WTC11 (cell line): ENCODE measurements at regions of chr12 and their contacts with region 1.

Region 1: DNA sequence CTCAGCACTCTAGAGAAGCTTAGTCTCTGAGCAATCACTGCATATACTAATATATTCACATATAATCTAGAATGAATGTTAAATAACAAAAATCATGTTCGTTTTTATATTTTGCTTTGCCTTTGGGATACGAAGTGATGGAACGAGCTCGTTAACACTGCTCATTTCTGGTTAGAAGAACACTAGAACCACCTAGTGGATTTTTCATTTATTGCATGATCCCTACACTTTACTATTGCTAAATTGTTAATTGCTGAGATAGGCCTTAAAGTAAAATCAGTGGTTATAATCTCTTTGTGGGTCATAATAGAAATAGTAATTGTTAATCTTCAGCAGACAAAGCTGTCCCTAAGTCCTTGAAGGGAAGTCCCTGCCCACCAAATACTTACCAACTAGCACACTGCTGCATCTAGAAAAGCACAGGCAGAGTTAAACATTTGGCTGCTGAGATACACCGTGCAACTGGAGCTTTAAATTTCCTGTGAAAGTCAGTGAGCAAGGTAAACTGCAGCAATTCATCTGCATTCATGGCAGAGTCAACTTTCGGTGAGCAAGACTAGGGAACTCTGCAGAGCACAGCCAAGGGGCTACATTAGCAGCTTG is 353.7 kb downstream of the APAF1 start:
- DNase-seq: no peak
- ATAC-seq: peak; percentile 73
- H3K4me3 Mint-ChIP-seq: no peak overlapping the region
- H3K27ac Mint-ChIP-seq: no peak overlapping the region
- H3K4me1 Mint-ChIP-seq: no peaks in the 10 kb centered on the region
- H3K27me3 Mint-ChIP-seq: no peaks in the 10 kb centered on the region
- CTCF ChIP-seq: peak; percentile 40

Region 2: GRCh38 chr12:98572010-98572409 is 426.8 kb before region 1 on chr12:
- CTCF ChIA-PET with region 1: interaction called, 11 read pairs
- POLR2A ChIA-PET with region 1: no interaction called
- DNase-seq: no peak
- ATAC-seq: peak; percentile 94
- H3K4me3 Mint-ChIP-seq: no peak overlapping the region
- H3K27ac Mint-ChIP-seq: no peak overlapping the region
- H3K4me1 Mint-ChIP-seq: no peaks in the 10 kb centered on the region
- H3K27me3 Mint-ChIP-seq: no peaks in the 10 kb centered on the region
- CTCF ChIP-seq: no peak

Region 3: DNA sequence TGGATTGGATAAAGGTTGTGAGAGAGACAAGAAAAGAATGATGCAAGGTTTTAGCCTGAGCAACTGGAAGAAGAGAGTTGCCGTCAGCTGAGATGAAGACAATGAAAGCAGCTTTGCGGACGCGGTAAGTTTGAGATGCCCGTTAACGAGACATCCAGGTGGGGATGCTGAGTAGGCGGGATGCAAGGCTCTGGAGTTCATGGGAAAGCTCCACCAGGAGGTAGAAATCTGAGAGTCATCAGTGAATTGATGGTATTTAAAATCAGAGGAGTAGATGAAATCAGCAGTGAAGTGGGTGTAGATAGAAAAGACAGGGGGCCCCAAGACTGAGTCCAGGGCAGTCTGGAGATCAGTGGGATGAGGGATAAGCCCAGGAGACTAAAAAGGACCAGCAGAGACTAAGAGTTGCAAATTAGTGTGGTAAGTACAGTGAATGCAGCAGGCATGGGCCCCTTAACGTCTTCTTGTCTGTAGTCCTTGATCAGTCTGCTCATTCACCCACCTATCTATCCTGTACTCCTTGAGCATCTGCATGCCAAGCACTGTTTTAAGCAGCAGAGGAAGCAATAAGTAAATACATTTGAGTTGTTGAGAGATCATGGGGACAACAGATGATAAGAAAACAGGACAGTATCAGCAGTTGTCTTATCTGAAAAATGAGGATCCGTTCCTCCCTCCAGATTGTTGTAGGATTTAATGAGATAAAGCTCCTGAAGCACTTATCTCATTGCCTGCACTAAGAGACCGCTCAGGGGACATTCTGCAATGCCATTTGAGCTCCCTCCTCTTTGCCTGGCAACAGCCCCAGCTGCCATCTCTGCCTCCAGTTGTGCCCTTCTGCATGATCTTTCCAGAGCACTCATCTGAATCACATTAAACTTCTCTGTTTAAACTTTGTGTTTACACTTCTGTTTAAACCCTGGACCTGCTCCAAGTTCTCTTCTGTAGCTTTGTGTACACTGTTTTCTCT is 262.2 kb before region 1 on chr12:
- CTCF ChIA-PET with region 1: interaction called, 15 read pairs
- POLR2A ChIA-PET with region 1: no interaction called
- DNase-seq: peak; percentile 25
- ATAC-seq: peak; percentile 69
- H3K4me3 Mint-ChIP-seq: no peak overlapping the region
- H3K27ac Mint-ChIP-seq: no peak overlapping the region
- H3K4me1 Mint-ChIP-seq: peaks cover 10% of the 10 kb centered on the region
- H3K27me3 Mint-ChIP-seq: peaks cover 16% of the 10 kb centered on the region
- CTCF ChIP-seq: no peak

Region 4: GRCh38 chr12:98955277-98955676 is 43.5 kb before region 1 on chr12:
- CTCF ChIA-PET with region 1: interaction called, 11 read pairs
- POLR2A ChIA-PET with region 1: no interaction called
- DNase-seq: peak; percentile 36
- ATAC-seq: peak; percentile 99
- H3K4me3 Mint-ChIP-seq: no peak overlapping the region
- H3K27ac Mint-ChIP-seq: no peak overlapping the region
- H3K4me1 Mint-ChIP-seq: no peaks in the 10 kb centered on the region
- H3K27me3 Mint-ChIP-seq: no peaks in the 10 kb centered on the region
- CTCF ChIP-seq: peak; percentile 54; the same call in 1 of the 2 replicates

Region 5: DNA sequence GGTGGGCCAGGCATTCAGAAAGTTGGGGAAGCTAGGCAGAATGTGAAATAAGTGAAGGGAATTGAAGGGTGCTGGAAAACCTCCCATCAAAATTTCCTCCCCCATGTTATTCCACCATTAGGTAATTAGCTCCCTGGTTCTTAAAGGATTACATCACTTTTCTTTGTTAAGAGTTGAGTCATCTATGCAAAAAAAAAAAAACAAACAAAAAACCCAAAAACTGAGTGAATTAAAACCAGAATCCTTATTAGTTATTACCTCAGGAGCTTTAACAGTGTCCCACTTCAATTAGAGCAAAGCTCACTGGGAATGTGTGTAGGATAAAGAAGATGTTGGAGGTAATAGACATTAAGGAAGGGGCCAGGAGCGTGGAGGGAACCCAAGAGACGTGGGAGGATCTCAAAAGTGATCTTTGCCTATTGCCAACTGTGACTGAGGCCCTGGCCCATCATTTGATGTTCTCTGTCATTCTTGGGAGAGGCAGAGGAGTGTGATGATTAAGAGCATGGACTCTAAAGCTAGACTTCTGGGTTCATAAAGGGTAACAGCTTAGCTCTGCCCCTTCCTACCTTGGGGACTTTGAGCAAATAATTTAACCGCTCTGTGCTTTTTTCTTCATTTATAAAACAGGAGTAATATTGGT is 11.0 kb after region 1 on chr12:
- CTCF ChIA-PET with region 1: interaction called, 11 read pairs
- POLR2A ChIA-PET with region 1: no interaction called
- DNase-seq: no peak
- ATAC-seq: no peak
- H3K4me3 Mint-ChIP-seq: no peak overlapping the region
- H3K27ac Mint-ChIP-seq: no peak overlapping the region
- H3K4me1 Mint-ChIP-seq: no peaks in the 10 kb centered on the region
- H3K27me3 Mint-ChIP-seq: no peaks in the 10 kb centered on the region
- CTCF ChIP-seq: no peak